GM12878 (cell line): ENCODE measurements at regions of chr2 and their contacts with region 1.

Region 1: DNA sequence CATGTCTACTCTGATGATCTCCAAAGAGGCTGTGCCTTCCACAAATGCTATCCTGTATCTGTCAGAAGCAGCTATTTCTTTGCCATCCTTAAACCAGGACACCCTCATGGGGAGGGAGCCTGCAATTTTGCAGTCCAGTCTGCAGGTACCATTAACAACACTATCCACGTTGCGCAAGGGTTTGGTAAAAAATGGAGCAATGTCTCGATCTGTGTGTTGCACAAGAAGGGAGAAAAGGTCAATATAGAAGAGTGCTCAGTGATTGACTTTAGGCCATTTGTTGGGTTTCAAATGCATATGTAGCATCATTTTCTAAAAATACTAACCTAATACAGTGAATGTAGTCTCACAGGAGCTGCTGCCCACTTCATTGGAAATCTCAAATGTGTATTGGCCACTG is 74.3 kb downstream of the TTN start:
- DNase-seq: no peak
- ATAC-seq: no peak
- H3K4me3 ChIP-seq: no peak overlapping the region
- H3K27ac ChIP-seq: no peak overlapping the region
- H3K4me1 ChIP-seq: no peaks in the 10 kb centered on the region
- H3K27me3 ChIP-seq: no peaks in the 10 kb centered on the region
- CTCF ChIP-seq: no peak
- EP300 ChIP-seq: no peak
- POLR2A ChIP-seq: no peak
- RAD21 ChIP-seq: no peak

Region 2: GRCh38 chr2:178750263-178750662 is 17.4 kb after region 1 on chr2:
- CTCF ChIA-PET with region 1: no interaction called
- POLR2A ChIA-PET with region 1: no interaction called
- RAD21 ChIA-PET with region 1: no interaction called
- SMC1A ChIA-PET with region 1: interaction called, 5 read pairs
- in situ Hi-C with region 1: no loop called
- intact Hi-C with region 1: loop called (anchors 1 kb)
- DNase-seq: no peak
- ATAC-seq: no peak
- H3K4me3 ChIP-seq: no peak overlapping the region
- H3K27ac ChIP-seq: no peak overlapping the region
- H3K4me1 ChIP-seq: no peaks in the 10 kb centered on the region
- H3K27me3 ChIP-seq: no peaks in the 10 kb centered on the region
- CTCF ChIP-seq: no peak
- EP300 ChIP-seq: no peak
- POLR2A ChIP-seq: no peak
- RAD21 ChIP-seq: no peak